ENCODE measurements at regions of chr14 and their contacts with region 1.

Region 1: DNA sequence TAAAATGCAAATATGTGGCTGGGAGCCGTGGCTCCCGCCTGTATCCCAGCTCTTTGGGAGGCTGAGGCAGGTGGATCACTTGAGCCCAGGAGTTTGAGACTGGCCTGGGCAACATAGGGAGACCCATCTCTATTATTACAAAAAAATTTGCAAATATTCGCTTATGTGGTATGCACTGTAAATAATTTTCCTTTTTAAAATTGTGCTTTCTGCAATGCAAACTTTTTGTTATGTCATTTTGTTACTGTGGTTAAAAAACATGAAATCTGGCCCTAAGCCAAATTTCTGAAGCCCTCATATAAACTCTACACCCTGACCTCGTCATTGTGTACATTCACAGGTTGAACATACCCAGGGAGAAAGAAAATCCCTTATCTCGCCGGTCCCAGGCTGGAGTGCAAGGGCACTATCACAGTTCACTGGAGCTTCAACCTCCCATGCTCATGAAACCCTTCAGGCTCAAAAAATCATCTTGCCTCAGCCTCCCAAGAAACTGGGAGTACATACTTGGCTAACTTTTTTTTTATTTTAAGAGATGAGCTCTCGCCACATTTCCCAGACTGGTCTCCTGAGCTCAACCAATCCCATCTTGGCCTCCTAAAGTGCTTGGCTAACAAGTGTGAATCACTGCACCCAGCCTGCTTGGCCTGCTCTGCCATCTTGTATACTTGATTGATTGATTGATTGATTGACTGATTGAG is 24.7 kb downstream of the TRAPPC6B start:
- DNase-seq: no peak
- ATAC-seq: no peak
- H3K4me3 Mint-ChIP-seq: no peak overlapping the region
- H3K27ac Mint-ChIP-seq: no peak overlapping the region
- H3K4me1 Mint-ChIP-seq: no peaks in the 10 kb centered on the region
- H3K27me3 Mint-ChIP-seq: no peaks in the 10 kb centered on the region
- CTCF ChIP-seq: no peak

Region 2: GRCh38 chr14:39158222-39158858 is 12.9 kb after region 1 on chr14:
- CTCF ChIA-PET with region 1: interaction called, 10 read pairs
- POLR2A ChIA-PET with region 1: no interaction called
- intact Hi-C with region 1: no loop called
- DNase-seq: no peak
- ATAC-seq: no peak
- H3K4me3 Mint-ChIP-seq: no peak overlapping the region
- H3K27ac Mint-ChIP-seq: no peak overlapping the region
- H3K4me1 Mint-ChIP-seq: peaks cover 14% of the 10 kb centered on the region
- H3K27me3 Mint-ChIP-seq: no peaks in the 10 kb centered on the region
- CTCF ChIP-seq: no peak

Region 3: DNA sequence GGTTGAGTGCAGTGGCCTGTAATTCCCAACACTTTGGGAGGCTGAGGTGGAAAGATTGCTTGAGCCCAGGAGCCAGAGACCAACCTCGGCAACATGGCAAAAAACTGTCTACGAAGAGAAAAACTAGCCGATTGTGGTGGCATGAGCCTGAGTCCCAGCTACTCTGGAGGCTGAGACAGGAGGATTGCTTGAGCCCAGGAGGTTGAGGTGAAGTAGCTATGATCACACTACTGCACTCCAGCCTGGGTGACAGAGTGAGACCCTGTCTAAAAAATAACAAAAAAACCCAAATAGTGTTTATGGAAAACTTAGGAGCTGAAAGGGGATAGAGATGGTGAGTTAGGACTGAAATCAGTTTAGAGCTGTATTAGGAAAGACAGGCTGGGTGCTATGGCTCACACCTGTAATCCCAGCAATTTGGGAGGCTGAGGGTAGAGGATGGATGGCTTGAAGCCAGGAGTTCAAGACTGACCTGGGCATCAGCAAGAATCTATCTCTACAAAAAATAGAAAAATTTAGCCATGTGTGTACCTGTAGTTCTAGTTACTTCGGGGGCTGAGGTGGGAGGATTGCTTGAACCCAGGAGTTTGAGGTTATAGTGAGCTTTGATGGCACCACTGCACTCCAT is 39.3 kb after region 1 on chr14:
- CTCF ChIA-PET with region 1: no interaction called
- POLR2A ChIA-PET with region 1: no interaction called
- intact Hi-C with region 1: no loop called
- DNase-seq: no peak
- ATAC-seq: no peak
- H3K4me3 Mint-ChIP-seq: no peak overlapping the region
- H3K27ac Mint-ChIP-seq: no peak overlapping the region
- H3K4me1 Mint-ChIP-seq: peaks cover 21% of the 10 kb centered on the region
- H3K27me3 Mint-ChIP-seq: no peaks in the 10 kb centered on the region
- CTCF ChIP-seq: no peak